ENCODE measurements at regions of chr4 and their contacts with region 1.

Region 1: DNA sequence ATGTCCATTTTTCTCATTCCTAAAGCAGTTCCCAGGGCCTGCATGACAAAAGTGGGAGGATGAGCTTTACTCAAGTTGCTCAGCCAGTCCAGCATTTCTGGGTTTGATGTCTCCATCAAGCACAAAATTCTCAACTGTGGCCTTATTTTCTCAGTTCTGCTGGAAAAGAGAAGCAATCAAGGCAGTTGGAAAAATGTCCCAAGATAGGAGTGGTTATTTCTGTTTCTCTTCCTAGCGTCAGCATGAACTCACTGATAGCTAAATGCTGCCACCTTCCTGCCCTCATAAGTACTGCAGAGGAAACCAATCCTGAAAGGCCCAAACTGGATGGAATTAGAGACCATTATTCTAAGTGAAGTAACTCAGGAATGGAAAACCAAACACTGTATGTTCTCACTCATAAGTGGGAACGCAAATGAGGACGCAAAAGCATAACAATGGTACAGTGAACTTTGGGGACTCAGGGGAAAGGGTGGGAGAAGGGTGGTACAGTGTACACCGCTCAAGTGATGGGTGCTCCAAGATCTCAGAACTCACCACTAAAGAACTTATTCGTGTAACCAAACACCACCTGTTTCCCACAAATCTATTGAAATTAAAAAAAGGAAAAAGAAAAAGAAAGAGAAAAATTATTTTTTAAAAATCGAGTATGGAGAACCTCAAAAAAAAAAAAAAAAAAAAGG is 29.6 kb downstream of the ADH7 start:
- DNase-seq: peak; percentile 79
- H3K4me3 ChIP-seq: no peak overlapping the region
- H3K27ac ChIP-seq: peak overlapping the region; percentile 82 to 87
- H3K4me1 ChIP-seq: peaks cover 0 to 71% (median 26%) of the 10 kb centered on the region in 4 donors
- H3K27me3 ChIP-seq: no peaks in the 10 kb centered on the region
- CTCF ChIP-seq: peak; percentile 90 to 98

Region 2: DNA sequence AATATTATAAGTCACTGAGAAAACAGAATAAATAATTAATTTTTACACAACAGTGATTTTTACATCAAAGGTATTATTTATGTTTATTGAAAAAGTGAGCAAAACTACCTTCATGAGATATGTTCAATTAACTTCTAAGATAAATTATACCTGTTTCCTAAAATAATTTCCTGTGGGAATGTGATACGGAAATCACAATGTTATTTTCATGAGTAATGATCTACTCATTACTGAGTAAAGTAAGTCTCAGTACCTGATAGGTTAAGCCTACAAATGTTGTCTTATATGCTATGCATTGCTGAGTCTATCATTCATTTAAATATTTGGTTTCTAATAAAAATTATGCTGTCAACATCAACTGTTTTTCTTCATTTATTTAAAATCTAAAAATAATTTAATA is 1586.3 kb before region 1 on chr4:
- intact Hi-C with region 1: no loop called
- DNase-seq: no peak
- H3K4me3 ChIP-seq: no peak overlapping the region
- H3K27ac ChIP-seq: no peak overlapping the region
- H3K4me1 ChIP-seq: no peaks in the 10 kb centered on the region
- H3K27me3 ChIP-seq: no peaks in the 10 kb centered on the region
- CTCF ChIP-seq: no peak

Region 3: DNA sequence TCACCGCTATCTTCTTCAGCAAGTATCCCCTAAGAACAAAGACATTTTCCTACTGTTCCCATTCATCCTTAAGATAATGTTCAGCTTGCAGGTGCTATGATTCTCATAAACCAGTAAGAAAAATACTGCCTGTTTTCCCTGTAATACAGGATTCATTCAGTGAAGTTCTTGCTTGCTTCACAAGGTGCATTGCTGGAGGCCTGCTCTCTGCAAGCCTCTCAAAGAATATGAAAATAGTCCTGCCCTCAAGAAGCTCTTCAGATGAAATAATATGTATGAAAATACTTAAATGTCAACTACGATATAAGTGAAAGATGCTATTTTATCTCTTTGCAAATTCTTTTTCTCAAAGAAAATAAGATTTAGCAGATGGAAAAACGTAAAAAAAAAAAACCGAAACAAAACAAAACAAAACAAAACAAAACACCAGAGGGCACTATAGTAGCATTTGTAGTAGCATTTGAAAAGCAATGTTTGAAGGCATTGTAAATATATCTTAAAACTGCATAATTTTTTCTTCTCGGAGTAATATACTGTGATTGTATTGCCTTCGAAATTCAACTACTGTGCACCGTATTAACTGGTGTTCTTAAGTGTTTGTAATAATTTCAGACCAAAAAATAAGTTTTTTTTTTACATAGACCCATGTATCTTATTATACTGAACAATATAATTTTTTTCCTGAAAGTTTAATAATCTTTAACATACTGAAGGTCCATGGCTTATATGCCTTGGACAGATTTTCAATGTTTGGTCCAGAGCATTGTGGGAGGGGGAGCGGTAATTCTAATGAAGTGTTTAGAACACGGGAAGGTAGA is 287.5 kb before region 1 on chr4:
- intact Hi-C with region 1: loop called (anchors 5 kb)
- DNase-seq: no peak
- H3K4me3 ChIP-seq: no peak overlapping the region
- H3K27ac ChIP-seq: peak overlapping the region in 1 of 2 donors; percentile 12
- H3K4me1 ChIP-seq: peaks cover 0 to 19% (median 0%) of the 10 kb centered on the region in 4 donors
- H3K27me3 ChIP-seq: no peaks in the 10 kb centered on the region
- CTCF ChIP-seq: peak; percentile 16 to 35

Region 4: GRCh38 chr4:99201690-99202089 is 203.9 kb before region 1 on chr4:
- intact Hi-C with region 1: loop called (anchors 5 kb)
- DNase-seq: no peak
- H3K4me3 ChIP-seq: no peak overlapping the region
- H3K27ac ChIP-seq: peak overlapping the region; percentile 71 to 74
- H3K4me1 ChIP-seq: peaks cover 0 to 45% (median 22%) of the 10 kb centered on the region in 4 donors
- H3K27me3 ChIP-seq: no peaks in the 10 kb centered on the region
- CTCF ChIP-seq: peak; percentile 32 to 40

Region 5: DNA sequence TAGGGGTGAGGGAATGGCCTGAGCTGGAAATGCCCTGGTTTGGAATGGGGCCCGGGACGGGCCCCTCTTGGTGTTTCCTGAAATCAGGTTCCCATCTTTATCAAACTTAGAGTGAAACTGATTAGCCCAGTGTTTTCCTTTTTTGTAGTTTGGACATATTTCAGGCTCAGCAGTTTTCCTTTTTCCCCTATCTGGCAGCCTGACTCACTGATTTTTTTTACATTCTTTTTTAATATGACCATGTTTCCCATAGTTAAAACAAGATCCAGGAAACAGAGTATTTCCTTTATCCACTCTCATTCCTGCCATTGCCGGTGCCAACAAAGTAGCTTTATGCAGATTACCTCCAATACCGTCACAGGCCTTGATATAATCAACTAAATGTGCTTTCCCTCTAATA is 84.7 kb after region 1 on chr4:
- intact Hi-C with region 1: no loop called
- DNase-seq: no peak
- H3K4me3 ChIP-seq: no peak overlapping the region
- H3K27ac ChIP-seq: no peak overlapping the region
- H3K4me1 ChIP-seq: no peaks in the 10 kb centered on the region
- H3K27me3 ChIP-seq: no peaks in the 10 kb centered on the region
- CTCF ChIP-seq: no peak

Region 6: DNA sequence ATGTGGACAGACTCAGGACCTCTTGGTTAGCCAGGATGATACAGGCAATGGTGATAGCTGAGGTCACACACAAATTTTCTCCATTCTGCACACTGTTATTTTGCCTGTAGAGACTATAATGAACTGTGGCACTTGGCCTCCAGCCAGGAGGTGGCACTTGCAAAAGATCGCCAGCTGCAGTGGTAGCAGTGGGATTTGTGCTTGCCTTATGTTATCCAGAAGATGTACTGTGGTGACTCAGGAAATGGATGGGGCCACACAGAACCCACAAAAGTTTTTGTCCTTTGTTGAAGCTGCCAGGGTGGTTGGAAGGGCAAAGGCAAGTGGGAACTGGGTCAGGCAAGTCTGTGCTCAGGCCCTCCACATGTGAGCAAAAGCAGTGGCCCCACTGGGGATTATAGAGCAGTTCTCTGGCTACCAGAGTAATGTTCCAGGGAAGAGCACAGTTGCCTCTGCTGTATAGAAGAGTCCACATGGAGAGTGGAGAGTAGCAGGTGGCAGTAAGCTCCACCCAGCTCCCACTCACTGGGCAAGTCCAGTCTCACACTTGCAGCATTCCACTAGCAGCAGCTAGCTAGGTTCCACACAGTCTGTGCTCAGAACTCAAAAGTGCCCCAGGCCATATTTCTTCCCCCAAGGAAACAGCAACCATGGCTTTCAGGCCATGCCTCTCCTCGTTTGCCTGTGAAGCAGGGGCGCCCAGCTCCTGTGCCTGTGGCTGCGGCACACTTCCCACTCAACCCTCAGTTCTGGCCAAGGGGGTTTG is 99.4 kb after region 1 on chr4:
- intact Hi-C with region 1: no loop called
- DNase-seq: no peak
- H3K4me3 ChIP-seq: no peak overlapping the region
- H3K27ac ChIP-seq: no peak overlapping the region
- H3K4me1 ChIP-seq: no peaks in the 10 kb centered on the region
- H3K27me3 ChIP-seq: no peaks in the 10 kb centered on the region
- CTCF ChIP-seq: no peak

Measured in tibial artery (tissue), 4 donors.